Transverse colon (tissue), 4 donors: ENCODE measurements at regions of chrX and their contacts with region 1.

Region 1: DNA sequence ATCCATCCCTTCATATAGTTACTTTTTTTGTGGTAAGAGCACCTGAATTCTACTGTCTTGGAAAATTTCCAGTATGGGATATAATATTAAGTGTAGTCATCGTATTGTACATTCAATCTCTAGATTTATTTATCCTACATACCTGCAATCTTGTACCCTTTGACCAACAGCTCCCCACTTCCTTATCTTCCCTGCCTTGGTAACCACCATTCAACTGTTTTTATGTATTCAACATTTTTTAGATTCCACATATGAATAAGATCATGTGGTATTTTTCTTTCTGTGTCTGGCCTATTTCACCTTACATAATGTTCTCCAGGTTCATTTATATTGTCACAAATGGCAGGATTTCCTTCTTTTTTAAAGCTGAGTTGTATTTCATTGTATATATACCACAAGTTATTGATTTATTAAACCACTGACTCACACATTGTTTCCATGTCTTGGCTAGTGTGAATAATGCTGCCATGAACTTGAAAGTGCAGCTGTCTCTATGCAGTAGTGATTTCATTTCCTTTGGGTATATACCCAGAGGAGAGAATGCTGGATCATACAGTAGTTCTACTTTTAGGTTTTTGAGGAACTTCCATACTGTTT is 572.5 kb downstream of the MAGEB5 start:
- DNase-seq: no peak
- H3K4me3 ChIP-seq: no peak overlapping the region
- H3K27ac ChIP-seq: no peak overlapping the region
- H3K4me1 ChIP-seq: no peaks in the 10 kb centered on the region
- H3K27me3 ChIP-seq: no peaks in the 10 kb centered on the region
- CTCF ChIP-seq: no peak
- EP300 ChIP-seq: no peak
- POLR2A ChIP-seq: no peak

Region 2: GRCh38 chrX:26778320-26778888 is 10.1 kb before region 1 on chrX:
- in situ Hi-C with region 1: no loop called
- intact Hi-C with region 1: loop called (anchors 1 kb)
- DNase-seq: no peak
- H3K4me3 ChIP-seq: no peak overlapping the region
- H3K27ac ChIP-seq: no peak overlapping the region
- H3K4me1 ChIP-seq: no peaks in the 10 kb centered on the region
- H3K27me3 ChIP-seq: no peaks in the 10 kb centered on the region
- CTCF ChIP-seq: no peak
- EP300 ChIP-seq: no peak
- POLR2A ChIP-seq: no peak

Region 3: DNA sequence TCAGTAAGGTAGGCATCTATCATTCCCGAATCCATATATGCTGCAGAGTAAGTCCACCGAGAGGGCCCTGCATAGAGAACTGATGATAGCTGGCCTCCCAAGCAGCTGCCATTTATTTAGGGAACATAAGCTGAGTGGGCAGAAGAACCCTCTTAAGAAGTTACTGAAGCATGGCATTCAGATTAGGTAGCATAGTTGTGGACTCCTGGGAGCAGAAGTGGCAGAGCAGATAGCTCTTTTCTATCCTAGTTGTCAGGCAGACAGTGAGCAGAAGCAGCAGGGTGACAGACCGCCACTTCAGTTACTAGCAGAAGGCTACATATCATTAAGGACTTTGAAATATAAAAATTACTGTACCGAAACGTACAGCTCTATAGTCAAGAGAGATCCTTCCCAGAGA is 220.0 kb after region 1 on chrX:
- in situ Hi-C with region 1: no loop called
- intact Hi-C with region 1: no loop called
- DNase-seq: no peak
- H3K4me3 ChIP-seq: no peak overlapping the region
- H3K27ac ChIP-seq: no peak overlapping the region
- H3K4me1 ChIP-seq: no peaks in the 10 kb centered on the region
- H3K27me3 ChIP-seq: no peaks in the 10 kb centered on the region
- CTCF ChIP-seq: no peak
- EP300 ChIP-seq: no peak
- POLR2A ChIP-seq: no peak